Vagina (tissue), 2 donors: ENCODE measurements at regions of chr16 and their contacts with region 1.

Region 1: DNA sequence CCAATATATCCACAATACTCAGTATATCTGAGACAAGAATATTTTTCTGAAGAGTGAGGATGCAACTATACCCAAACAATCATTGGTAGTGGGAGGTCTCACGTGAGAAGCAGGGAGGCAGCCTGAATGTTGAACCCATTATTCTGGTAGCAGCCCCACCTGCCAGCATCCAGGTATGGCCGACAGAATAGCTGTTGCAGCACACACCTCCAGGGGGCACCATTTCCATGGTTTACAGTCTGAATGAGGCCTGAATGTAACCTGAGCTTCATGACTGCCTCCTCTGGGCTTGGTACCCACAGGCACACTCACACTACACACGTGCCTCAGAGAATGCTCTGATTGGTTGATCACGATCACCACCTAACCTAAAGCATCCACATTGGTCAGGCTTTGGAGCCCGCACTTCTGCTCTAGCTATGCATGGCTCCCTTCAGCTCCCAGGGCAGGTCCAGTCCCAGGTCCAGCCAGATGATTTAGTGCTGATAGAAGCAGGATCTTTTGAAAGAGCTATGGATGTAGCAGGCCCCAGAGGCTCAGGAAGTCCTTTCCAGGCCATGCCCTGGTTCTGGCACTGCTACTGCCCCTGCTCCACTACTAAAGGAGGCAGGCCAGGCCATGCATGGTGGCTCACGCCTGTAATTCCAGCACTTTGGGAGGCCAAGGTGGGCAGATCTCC is 11.0 kb upstream of the CBFB start:
- DNase-seq: peak in 1 of 2 donors; percentile 58
- H3K4me3 ChIP-seq: no peak overlapping the region
- H3K27ac ChIP-seq: no peak overlapping the region
- H3K4me1 ChIP-seq: peaks cover 20% of the 10 kb centered on the region
- H3K27me3 ChIP-seq: no peaks in the 10 kb centered on the region
- CTCF ChIP-seq: peak in 2 of 3 experiments; percentile 13 to 58
- POLR2A ChIP-seq: no peak

Region 2: DNA sequence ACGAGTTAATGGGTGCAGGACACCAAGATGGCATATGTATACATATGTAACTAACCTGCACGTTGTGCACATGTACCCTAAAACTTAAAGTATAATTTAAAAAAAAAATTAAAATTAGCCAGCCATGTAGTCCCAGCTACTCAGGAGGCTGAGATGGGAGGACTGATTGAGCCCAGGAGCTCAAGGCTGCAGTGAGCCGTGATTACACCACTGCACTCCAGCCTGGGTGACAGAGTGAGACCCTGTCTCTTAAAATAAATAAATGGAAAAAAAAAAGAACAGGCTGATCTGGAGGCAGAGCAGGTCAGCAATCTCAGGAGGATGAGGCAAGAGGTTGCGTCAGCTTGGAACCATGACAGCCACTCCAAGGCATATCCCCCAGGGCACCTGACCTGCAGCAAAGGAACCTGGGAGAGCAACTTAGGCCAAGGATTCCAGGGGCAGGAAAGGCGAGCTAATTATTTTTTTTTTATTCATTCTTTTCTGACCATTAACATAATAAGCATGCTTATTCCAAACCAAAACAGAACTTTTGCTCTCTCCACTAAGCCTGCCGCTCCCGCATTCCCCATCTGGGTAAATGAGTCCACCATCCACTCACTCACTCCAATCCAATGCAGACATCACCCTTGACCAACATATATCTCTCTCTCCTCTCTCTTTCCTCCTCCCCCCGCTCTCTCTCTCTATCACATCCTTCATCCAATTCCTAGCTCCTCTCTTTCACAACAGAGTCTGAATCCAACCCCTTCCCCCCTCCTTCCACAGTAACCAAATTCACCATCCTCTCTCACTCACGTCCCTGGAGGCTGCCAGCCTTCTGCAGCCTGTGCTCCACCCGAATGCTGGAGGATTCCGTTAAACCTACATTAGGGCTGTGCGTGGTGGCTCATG is 515.7 kb before region 1 on chr16:
- intact Hi-C with region 1: no loop called
- DNase-seq: no peak
- H3K4me3 ChIP-seq: no peak overlapping the region
- H3K27ac ChIP-seq: peak overlapping the region; percentile 69
- H3K4me1 ChIP-seq: peaks cover 22% of the 10 kb centered on the region
- H3K27me3 ChIP-seq: no peaks in the 10 kb centered on the region
- CTCF ChIP-seq: no peak
- POLR2A ChIP-seq: no peak

Region 3: DNA sequence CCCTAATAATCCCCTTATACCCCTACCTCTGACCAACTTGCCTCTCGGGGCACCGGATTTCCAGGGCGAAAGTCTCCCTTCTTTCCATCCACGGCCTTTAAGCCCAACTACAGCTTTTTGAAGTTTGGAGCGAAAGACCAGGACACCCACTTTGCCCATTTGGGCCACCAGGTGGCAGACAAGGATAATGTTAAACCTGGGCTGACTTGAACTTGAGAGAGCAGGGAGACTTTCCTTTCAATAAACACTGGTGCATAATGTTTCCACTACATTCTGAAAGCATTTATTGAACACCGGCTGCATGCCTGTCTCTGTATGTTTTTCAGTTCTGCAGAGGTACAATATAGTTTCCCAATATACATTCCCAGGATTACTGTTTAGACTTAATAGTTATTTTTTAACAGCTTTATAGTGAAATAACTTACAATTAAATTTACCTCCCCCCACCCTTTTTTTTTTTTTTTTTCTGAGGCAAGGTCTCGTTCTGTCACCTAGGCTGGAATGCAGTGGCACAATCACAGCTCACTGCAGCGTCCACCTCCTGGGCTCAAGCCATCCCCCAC is 63.8 kb before region 1 on chr16:
- intact Hi-C with region 1: no loop called
- DNase-seq: no peak
- H3K4me3 ChIP-seq: no peak overlapping the region
- H3K27ac ChIP-seq: no peak overlapping the region
- H3K4me1 ChIP-seq: peaks cover under 1% of the 10 kb centered on the region
- H3K27me3 ChIP-seq: no peaks in the 10 kb centered on the region
- CTCF ChIP-seq: peak; percentile 54 to 76 (median 75)
- POLR2A ChIP-seq: no peak

Region 4: GRCh38 chr16:67191995-67192681 is 174.2 kb after region 1 on chr16 and contains the start of gene E2F4:
- intact Hi-C with region 1: loop called (anchors 5 kb)
- DNase-seq: no peak
- H3K4me3 ChIP-seq: peak within 1 kb of the TSS; percentile 88 to 93
- H3K27ac ChIP-seq: peak within 1 kb of the TSS; percentile 75
- H3K4me1 ChIP-seq: peaks cover 28% of the 10 kb centered on the region
- H3K27me3 ChIP-seq: no peaks in the 10 kb centered on the region
- CTCF ChIP-seq: peak in 1 of 3 experiments; percentile 19
- POLR2A ChIP-seq: peak in 1 of 2 donors; percentile 57
- total RNA-seq, gene E2F4: 78.1 TPM